Calu3 (cell line): ENCODE measurements at regions of chrX and their contacts with region 1.

Region 1: DNA sequence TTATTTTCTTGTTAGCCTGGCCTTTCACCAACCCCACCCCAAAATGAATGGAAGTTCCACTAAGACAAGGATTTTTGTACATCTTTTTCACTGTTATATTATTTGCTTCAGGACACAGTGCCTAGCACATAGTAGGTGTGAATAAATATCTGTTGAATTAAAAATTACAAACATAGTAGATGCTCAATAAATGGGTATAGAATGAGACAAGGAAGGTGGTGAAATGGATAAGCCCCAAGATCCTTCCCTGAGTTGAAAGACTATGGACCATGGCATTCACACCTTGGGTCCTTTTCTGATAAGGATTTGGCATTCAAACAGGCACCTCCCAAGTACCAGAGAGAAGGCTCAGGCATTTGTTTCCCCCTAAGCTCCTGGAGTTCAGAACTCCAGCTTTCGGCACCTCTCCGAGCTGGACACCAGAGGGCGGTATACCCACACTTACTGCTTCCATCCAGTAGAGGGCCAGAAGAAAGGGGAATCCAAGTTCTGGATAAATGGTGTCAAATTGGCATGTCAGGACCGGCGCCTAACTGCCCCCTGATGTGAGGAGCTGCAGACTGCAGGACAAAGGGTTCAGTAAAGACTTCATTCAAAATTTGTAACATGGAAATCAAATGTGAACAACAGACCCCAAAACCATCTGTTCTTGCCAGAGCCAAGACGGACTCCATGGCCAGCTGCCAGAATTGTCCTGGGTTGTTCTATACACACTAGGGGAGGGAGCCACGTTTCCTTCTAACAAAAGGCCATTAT is 193.0 kb downstream of the GPC3 start:
- DNase-seq: peak; percentile 78
- H3K4me3 Mint-ChIP-seq: peak overlapping the region; percentile 58
- H3K27ac Mint-ChIP-seq: no peak overlapping the region
- H3K4me1 Mint-ChIP-seq: no peaks in the 10 kb centered on the region
- H3K27me3 Mint-ChIP-seq: no peaks in the 10 kb centered on the region
- CTCF ChIP-seq: peak; percentile 98

Region 2: GRCh38 chrX:133185938-133186337 is 606.4 kb before region 1 on chrX:
- CTCF ChIA-PET with region 1: no interaction called
- intact Hi-C with region 1: no loop called
- DNase-seq: peak; percentile 59
- H3K4me3 Mint-ChIP-seq: peak overlapping the region; percentile 7
- H3K27ac Mint-ChIP-seq: peak overlapping the region; percentile 67
- H3K4me1 Mint-ChIP-seq: peaks cover 34% of the 10 kb centered on the region
- H3K27me3 Mint-ChIP-seq: no peaks in the 10 kb centered on the region
- CTCF ChIP-seq: no peak

Region 3: GRCh38 chrX:133698298-133698697 is 94.1 kb before region 1 on chrX:
- CTCF ChIA-PET with region 1: interaction called, 19 read pairs
- intact Hi-C with region 1: loop called (anchors 5 kb)
- DNase-seq: peak; percentile 26
- H3K4me3 Mint-ChIP-seq: peak overlapping the region; percentile 14
- H3K27ac Mint-ChIP-seq: peak overlapping the region; percentile 85
- H3K4me1 Mint-ChIP-seq: peaks cover 58% of the 10 kb centered on the region
- H3K27me3 Mint-ChIP-seq: no peaks in the 10 kb centered on the region
- CTCF ChIP-seq: no peak

Region 4: DNA sequence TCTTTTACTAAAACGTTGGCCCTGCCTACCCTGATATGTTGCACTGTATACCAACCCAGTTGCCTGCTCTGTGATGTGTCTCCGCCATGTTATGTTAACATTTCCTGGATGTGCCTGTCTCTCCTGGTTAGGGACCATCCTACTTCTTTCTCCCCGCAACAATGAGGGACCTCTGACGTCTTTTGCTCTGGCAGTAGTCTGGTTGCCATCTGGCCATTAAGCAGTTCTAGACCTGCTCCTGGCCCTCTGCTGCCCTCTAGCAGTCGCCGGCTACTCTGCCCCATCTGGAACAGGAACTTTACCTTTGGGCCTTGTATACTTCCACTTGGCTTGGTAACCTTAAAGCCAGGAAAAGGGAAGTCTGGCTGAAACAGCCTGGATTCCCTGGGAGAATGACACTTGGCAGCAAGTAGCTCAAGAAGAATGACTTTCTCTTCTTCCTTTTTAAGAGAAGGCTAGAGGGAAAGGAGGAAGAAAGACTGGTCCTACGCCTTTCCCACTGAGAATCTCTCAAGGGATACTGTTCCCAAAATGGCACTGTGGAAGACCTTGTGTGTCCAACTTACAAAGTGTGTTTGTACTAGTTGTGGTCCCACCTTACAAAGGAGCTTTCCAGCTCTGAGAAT is 129.5 kb after region 1 on chrX:
- CTCF ChIA-PET with region 1: interaction called, 4 read pairs
- intact Hi-C with region 1: loop called (anchors 1 kb)
- DNase-seq: peak; percentile 75
- H3K4me3 Mint-ChIP-seq: peak overlapping the region; percentile 13
- H3K27ac Mint-ChIP-seq: peak overlapping the region; percentile 13
- H3K4me1 Mint-ChIP-seq: peaks cover 12% of the 10 kb centered on the region
- H3K27me3 Mint-ChIP-seq: no peaks in the 10 kb centered on the region
- CTCF ChIP-seq: peak; percentile 66

Region 5: GRCh38 chrX:134026565-134027311 is 234.4 kb after region 1 on chrX:
- CTCF ChIA-PET with region 1: interaction called, 14 read pairs
- intact Hi-C with region 1: loop called (anchors 1 kb)
- DNase-seq: peak; percentile 64
- H3K4me3 Mint-ChIP-seq: peak overlapping the region; percentile 53
- H3K27ac Mint-ChIP-seq: no peak overlapping the region
- H3K4me1 Mint-ChIP-seq: peaks cover 9% of the 10 kb centered on the region
- H3K27me3 Mint-ChIP-seq: no peaks in the 10 kb centered on the region
- CTCF ChIP-seq: peak; percentile 60

Region 6: DNA sequence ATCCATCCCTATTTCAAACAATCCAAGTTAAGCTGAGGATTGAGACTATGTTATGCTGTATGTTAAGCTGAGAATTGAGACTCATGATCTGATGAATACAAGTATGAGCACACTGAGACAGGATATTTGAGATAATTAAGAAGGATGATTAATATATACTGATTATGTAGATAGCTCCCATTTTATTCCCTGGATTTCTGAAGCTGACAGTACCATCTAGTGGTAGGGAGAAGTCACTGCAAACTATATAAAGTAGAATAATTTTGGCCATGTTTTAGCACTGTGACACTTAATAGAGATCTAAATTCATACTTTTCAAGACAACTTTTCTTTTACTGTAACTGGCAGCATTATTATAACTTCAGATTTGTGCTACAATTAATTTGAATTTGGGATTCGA is 603.8 kb after region 1 on chrX:
- CTCF ChIA-PET with region 1: interaction called, 3 read pairs
- intact Hi-C with region 1: loop called (anchors 5 kb)
- DNase-seq: no peak
- H3K4me3 Mint-ChIP-seq: no peak overlapping the region
- H3K27ac Mint-ChIP-seq: peak overlapping the region; percentile 25
- H3K4me1 Mint-ChIP-seq: no peaks in the 10 kb centered on the region
- H3K27me3 Mint-ChIP-seq: no peaks in the 10 kb centered on the region
- CTCF ChIP-seq: no peak